ENCODE measurements at regions of chr17 and their contacts with region 1.

Region 1: DNA sequence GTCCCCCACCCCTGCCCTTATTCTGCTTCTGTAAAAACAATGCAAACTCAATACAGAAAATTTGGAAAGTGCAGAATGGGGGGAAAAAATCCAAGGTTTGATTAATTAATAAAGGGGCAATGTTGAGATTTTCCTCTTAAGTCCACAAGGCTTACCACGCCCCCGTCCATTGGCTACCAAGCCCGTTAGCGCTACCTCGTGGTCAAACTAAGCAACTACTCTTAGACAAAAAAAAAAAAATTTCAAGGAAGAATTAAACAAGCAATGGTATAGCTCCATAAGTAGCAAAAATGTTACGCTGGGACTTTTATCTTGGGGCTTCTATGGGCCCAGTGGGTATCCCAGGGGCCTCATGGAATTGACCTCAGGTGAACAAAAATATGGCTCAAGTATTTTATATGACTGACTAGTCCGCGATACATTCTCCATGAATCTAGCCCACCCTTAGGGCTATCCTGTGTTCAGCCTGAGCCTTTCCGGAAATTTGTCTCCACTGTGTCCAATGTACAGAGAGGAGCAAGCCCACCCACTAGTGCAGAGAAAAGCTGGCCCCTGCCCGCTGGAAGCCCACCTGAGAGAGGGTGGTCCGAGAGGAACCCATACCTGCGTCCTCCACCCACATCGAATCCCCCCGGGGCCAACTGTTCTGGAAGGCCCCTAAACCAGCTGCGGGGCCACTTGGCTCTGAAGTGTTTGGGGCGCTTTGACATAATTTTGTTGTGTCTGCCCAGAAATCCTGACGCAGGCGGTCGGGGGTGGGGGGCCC is 19.1 kb upstream of the TEX2 start:
- DNase-seq: peak; percentile 63
- H3K4me3 Mint-ChIP-seq: no peak overlapping the region
- H3K27ac Mint-ChIP-seq: no peak overlapping the region
- H3K4me1 Mint-ChIP-seq: peaks cover 6% of the 10 kb centered on the region
- H3K27me3 Mint-ChIP-seq: no peaks in the 10 kb centered on the region

Region 2: GRCh38 chr17:63911657-63912426 is 370.3 kb before region 1 on chr17:
- CTCF ChIA-PET with region 1: interaction called, 13 read pairs
- POLR2A ChIA-PET with region 1: no interaction called
- intact Hi-C with region 1: loop called (anchors 10 kb)
- DNase-seq: peak; percentile 77
- H3K4me3 Mint-ChIP-seq: no peak overlapping the region
- H3K27ac Mint-ChIP-seq: no peak overlapping the region
- H3K4me1 Mint-ChIP-seq: no peaks in the 10 kb centered on the region
- H3K27me3 Mint-ChIP-seq: no peaks in the 10 kb centered on the region

Region 3: DNA sequence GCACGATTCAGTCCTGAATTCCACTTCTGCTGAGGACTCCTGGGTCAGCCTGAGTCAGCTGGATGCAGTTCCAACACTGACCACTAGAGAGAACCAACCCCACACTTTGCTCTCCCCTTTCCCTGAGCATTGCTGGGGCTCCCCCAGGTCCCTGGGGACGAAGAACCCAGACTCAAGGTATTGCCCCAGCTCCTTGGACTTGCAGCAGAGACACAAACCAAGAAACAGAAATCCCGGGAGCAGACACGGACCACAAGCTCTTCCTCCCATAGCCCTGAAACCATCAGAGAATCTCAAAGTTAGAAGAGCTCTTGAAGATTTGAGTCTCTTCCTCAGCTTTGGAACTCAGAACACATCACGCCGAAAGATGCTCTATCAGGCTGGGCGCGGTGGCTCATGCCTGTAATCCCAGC is 362.8 kb before region 1 on chr17:
- CTCF ChIA-PET with region 1: interaction called, 12 read pairs
- POLR2A ChIA-PET with region 1: no interaction called
- intact Hi-C with region 1: loop called (anchors 10 kb)
- DNase-seq: peak; percentile 84
- H3K4me3 Mint-ChIP-seq: peak overlapping the region; percentile 27
- H3K27ac Mint-ChIP-seq: peak overlapping the region; percentile 44
- H3K4me1 Mint-ChIP-seq: peaks cover 6% of the 10 kb centered on the region
- H3K27me3 Mint-ChIP-seq: no peaks in the 10 kb centered on the region

Region 4: GRCh38 chr17:64056269-64057005 is 225.7 kb before region 1 on chr17:
- CTCF ChIA-PET with region 1: no interaction called
- POLR2A ChIA-PET with region 1: no interaction called
- intact Hi-C with region 1: no loop called
- DNase-seq: no peak
- H3K4me3 Mint-ChIP-seq: no peak overlapping the region
- H3K27ac Mint-ChIP-seq: peak overlapping the region; percentile 64
- H3K4me1 Mint-ChIP-seq: peaks cover 55% of the 10 kb centered on the region
- H3K27me3 Mint-ChIP-seq: no peaks in the 10 kb centered on the region